Dendritic cell treated with granulocyte-macrophage colony-stimulating factor and Interleukin-4, amounts not matched to agents 40 ng/mL and 50 ng/mL, for 4 days (primary cell): ENCODE measurements at regions of chr10 and their contacts with region 1.

Region 1: GRCh38 chr10:68720793-68721672 is at the start of gene CCAR1:
- H3K4me3 Mint-ChIP-seq: peak within 1 kb of the TSS; percentile 93
- H3K27ac Mint-ChIP-seq: peak within 1 kb of the TSS; percentile 97
- H3K4me1 Mint-ChIP-seq: peaks cover 10% of the 10 kb centered on the region
- H3K27me3 Mint-ChIP-seq: peaks cover 7% of the 10 kb centered on the region

Region 2: GRCh38 chr10:68526626-68527307 is 194.3 kb before region 1 on chr10:
- intact Hi-C with region 1: loop called (anchors 2 kb)
- H3K4me3 Mint-ChIP-seq: peak overlapping the region; percentile 85
- H3K27ac Mint-ChIP-seq: peak overlapping the region; percentile 87
- H3K4me1 Mint-ChIP-seq: peaks cover 20% of the 10 kb centered on the region
- H3K27me3 Mint-ChIP-seq: no peaks in the 10 kb centered on the region

Region 3: DNA sequence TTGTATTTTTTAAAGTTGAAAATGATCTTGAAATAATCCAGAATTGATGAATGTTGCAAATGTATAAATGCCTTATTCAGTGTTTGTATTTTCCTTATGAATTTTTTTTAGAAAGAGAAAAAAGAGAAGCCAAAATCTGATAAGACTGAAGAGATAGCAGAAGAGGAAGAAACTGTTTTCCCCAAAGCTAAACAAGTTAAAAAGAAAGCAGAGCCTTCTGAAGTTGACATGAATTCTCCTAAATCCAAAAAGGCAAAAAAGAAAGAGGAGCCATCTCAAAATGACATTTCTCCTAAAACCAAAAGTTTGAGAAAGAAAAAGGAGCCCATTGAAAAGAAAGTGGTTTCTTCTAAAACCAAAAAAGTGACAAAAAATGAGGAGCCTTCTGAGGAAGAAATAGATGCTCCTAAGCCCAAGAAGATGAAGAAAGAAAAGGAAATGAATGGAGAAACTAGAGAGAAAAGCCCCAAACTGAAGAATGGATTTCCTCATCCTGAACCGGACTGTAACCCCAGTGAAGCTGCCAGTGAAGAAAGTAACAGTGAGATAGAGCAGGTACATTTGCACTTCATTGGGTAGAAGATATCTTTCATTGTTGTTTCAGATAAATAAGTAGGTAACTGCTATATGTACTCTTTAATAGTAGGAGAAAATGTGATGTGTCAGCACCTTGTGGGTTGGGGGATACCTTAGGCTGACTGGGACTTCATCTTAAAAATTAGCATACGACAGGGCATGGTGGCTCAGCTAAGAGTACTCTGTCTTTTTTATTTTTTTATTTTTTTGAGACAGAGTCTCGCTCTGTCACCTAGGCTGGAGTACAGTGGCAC is 238.9 kb after region 1 on chr10:
- intact Hi-C with region 1: no loop called
- H3K4me3 Mint-ChIP-seq: no peak overlapping the region
- H3K27ac Mint-ChIP-seq: peak overlapping the region; percentile 7
- H3K4me1 Mint-ChIP-seq: peaks cover 23% of the 10 kb centered on the region
- H3K27me3 Mint-ChIP-seq: no peaks in the 10 kb centered on the region